ENCODE measurements at regions of chr12 and their contacts with region 1.

Region 1: GRCh38 chr12:67433385-67434175 is 164.4 kb downstream of the CAND1 start:
- DNase-seq: no peak
- H3K4me3 ChIP-seq: no peak overlapping the region
- H3K27ac ChIP-seq: no peak overlapping the region
- H3K4me1 ChIP-seq: peaks cover 16% of the 10 kb centered on the region
- H3K27me3 ChIP-seq: no peaks in the 10 kb centered on the region
- CTCF ChIP-seq: no peak
- EP300 ChIP-seq: no peak
- POLR2A ChIP-seq: no peak

Region 2: DNA sequence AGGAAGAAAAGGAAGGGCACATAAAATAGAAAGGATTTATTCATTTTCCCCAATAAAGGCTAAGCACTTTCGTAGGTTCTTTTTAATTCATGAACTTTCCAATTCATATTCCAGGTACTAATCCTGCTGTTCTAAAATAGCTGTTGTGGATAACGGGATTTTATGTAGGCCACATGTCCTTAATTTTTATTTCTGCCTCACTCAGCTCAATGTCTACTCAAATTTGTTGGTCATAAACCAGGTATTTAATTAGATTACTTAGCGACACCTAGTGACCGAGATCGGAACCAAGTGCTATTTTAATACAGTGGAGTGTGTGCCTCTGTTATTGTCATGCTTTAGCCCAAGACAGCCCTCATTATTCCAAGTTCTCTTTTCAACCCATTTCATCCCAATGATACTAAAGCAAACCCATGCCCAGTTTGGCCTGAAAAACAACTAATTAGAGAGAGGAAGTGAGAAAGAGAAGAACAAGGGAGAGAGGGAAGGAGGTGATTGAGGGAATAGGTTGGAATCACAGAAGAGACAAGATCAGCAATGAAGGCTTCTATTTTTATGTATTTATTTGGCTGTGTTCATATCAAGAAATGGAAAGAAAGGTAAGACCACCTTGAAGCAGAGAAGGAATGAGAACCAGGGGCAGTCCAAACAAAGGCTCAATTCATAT is 509.8 kb after region 1 on chr12:
- intact Hi-C with region 1: loop called in 2 of 4 experiments (anchors 10 kb)
- DNase-seq: peak in 4 of 5 donors; percentile 24 to 65 (median 38)
- H3K4me3 ChIP-seq: no peak overlapping the region
- H3K27ac ChIP-seq: no peak overlapping the region
- H3K4me1 ChIP-seq: no peaks in the 10 kb centered on the region
- H3K27me3 ChIP-seq: no peaks in the 10 kb centered on the region
- CTCF ChIP-seq: peak in 2 of 3 donors; percentile 54 to 55
- EP300 ChIP-seq: no peak
- POLR2A ChIP-seq: no peak